Activated CD4-positive, alpha-beta memory T cell treated with anti-CD3 and anti-CD28 coated beads for 36 hours (primary cell): ENCODE measurements at regions of chrX and their contacts with region 1.

Region 1: DNA sequence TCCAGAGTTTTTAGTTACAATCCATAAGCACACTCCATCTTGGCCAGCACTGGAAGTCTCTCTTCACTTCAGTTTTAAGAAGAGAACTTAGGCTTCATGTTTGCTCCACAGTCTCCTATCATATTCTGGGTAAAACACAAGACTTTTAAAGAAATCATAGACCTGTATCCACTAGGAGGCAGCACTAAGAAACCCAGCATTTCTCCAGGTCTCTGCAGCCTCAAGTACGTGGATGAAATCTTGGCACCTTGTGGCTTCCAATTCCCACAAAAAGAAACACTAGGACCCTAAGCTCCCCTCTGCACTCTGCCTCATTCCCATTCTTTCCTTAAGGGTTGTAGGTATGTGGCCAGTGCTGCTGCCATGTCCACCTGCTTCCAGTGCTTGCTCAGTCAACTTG is 367.3 kb upstream of the CASK start:
- DNase-seq: no peak
- H3K4me3 Mint-ChIP-seq: no peak overlapping the region
- H3K27ac Mint-ChIP-seq: no peak overlapping the region
- H3K4me1 Mint-ChIP-seq: peaks cover 28% of the 10 kb centered on the region
- H3K27me3 Mint-ChIP-seq: no peaks in the 10 kb centered on the region

Region 2: DNA sequence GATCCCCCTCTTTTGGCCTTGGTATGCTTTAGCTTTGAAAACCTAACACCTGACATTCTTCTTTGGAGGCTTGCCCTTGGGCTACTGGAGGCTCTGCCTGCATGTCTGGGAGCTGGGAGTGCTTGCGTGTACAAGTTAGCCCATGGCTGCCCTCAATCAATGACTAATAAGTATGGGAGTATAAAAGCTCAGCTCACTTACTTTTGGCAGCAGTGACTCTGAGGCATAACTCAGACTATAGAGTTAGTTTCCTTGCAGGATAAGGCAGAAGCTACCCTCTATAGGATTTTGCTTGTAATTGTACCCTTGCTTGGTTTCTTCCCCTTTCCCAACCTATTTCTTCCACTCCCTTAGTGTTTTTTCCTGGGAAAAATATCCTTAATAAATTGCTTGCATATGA is 239.4 kb after region 1 on chrX:
- CTCF ChIA-PET with region 1: no interaction called
- POLR2A ChIA-PET with region 1: no interaction called
- intact Hi-C with region 1: loop called (anchors 5 kb)
- DNase-seq: no peak
- H3K4me3 Mint-ChIP-seq: no peak overlapping the region
- H3K27ac Mint-ChIP-seq: no peak overlapping the region
- H3K4me1 Mint-ChIP-seq: peaks cover 17% of the 10 kb centered on the region
- H3K27me3 Mint-ChIP-seq: no peaks in the 10 kb centered on the region